HepG2 (cell line): ENCODE measurements at regions of chr16 and their contacts with region 1.

Region 1: DNA sequence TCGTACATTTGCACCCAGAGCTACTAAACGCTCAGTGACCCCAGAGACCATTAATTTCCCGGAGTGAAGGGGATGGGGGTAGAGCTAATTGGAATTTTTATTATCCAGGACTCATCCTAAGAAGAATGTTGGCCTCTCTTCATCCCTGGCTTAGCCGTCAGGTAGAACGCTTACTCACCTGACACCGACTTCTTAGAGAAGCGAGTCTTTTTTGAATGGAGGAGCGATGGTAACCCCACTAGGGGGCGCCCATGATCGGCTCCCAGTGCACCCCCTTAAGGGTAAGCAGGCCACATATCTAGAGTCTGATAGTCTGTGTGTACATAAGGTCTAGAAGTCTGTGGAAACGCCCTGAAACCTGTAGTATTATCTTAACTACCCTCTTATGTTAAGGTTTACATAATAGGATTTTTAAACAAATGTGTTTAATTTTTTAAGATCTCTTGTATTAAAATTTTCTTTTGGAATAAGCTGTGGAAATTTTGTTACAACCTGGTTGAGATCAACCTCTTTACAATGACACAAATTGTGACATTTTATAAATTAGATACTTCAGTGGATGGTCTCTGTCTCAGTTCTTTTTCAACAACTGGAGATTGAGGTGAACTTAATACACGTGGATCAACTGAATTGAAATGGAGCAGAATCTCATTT is 229.8 kb downstream of the CPPED1 start:
- DNase-seq: peak; percentile 86
- ATAC-seq: peak; percentile 84
- H3K4me3 ChIP-seq: no peak overlapping the region
- H3K27ac ChIP-seq: no peak overlapping the region
- H3K4me1 ChIP-seq: peaks cover 23% of the 10 kb centered on the region
- H3K27me3 ChIP-seq: no peaks in the 10 kb centered on the region
- CTCF ChIP-seq: peak; percentile 93
- EP300 ChIP-seq: peak in 1 of 2 experiments; percentile 62; a peak in 1 of 4 replicates
- POLR2A ChIP-seq: no peak
- RAD21 ChIP-seq: peak; percentile 99

Region 2: DNA sequence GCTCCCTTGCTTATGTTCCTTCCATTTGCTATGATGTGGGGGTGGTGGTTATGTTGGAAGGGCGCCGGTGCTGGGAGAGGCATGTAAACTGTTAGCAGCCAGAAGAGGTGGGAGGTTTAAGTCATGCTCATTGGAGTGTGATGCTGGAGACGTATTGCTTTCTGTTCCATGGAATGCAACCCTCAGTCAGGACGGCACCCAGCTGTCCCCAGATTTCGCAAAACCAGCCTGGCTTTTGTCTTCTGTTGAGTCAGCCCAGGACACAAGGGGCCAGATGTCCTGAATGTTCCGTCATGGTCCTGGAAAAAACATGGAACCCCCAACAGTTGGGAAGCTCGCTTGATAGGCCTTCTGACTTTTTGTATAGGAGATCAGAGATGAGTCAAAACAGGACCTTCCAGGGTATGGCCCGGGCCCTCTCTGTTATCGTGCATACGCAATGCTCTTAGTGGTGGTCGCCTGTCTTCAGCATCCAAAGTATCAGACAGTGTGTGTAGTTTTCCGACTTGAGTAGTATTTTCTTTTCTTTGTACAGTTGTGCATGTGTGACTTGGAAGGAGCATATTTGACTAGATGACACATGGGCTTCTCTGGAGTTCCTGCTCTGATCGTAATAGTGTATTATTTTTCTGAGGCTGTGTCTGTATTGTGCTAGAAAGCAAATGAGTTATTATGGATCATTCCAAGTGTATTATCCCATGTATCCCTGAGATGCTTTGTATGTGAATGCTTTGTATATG is 395.4 kb before region 1 on chr16:
- CTCF ChIA-PET with region 1: no interaction called
- POLR2A ChIA-PET with region 1: no interaction called
- in situ Hi-C with region 1: no loop called
- intact Hi-C with region 1: no loop called
- DNase-seq: no peak
- ATAC-seq: no peak
- H3K4me3 ChIP-seq: no peak overlapping the region
- H3K27ac ChIP-seq: no peak overlapping the region
- H3K4me1 ChIP-seq: peaks cover 12% of the 10 kb centered on the region
- H3K27me3 ChIP-seq: no peaks in the 10 kb centered on the region
- CTCF ChIP-seq: no peak
- EP300 ChIP-seq: no peak
- POLR2A ChIP-seq: no peak
- RAD21 ChIP-seq: no peak

Region 3: DNA sequence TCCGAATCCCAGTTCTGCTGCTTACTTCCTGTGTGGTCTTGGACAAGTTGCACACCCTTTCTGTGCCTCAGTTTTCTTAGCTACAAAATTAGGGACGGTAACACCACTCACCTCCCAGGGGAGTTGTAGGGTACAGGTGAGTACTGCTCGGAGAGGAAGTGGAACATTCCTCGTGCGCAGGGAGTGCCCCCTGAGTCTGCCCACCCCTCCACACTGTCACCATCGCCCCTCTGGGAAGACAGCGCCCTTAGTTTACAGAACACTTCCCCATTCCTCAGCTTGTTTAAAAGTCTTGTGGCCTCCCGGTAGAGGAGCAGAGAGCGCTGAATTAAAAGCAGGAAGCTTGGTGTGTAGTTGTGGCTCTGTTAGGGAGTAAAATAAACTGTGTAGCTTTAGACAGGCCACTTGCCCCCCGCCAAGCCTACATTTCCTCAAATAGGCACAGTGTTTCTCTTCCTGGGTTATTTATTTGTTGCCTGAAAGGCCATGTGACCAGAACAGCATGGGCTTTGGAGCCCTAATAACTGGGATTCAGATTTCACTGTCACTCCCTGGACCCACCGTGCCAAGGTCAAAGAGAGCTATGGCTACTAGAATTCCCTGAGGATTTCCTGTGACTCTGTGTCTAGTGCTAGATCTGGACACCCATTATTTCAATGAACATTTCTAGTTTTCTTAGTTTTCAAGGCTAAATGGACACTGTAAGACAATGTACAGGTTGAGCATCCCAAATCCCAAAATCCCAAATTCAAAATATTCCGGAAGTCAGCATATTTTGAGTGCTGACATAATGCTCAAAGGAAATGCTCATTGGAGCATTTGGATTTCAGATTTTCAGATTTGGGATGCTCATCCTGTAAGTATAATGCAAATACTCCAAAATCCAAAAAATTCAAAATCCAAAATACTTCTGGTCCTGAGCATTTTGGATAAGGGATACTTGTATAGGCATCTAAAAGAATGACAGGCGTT is 224.8 kb before region 1 on chr16:
- CTCF ChIA-PET with region 1: no interaction called
- POLR2A ChIA-PET with region 1: no interaction called
- in situ Hi-C with region 1: no loop called
- intact Hi-C with region 1: no loop called
- DNase-seq: peak; percentile 23
- ATAC-seq: peak; percentile 70
- H3K4me3 ChIP-seq: no peak overlapping the region
- H3K27ac ChIP-seq: no peak overlapping the region
- H3K4me1 ChIP-seq: peaks cover 12% of the 10 kb centered on the region
- H3K27me3 ChIP-seq: no peaks in the 10 kb centered on the region
- CTCF ChIP-seq: no peak
- EP300 ChIP-seq: no peak
- POLR2A ChIP-seq: no peak
- RAD21 ChIP-seq: no peak

Region 4: DNA sequence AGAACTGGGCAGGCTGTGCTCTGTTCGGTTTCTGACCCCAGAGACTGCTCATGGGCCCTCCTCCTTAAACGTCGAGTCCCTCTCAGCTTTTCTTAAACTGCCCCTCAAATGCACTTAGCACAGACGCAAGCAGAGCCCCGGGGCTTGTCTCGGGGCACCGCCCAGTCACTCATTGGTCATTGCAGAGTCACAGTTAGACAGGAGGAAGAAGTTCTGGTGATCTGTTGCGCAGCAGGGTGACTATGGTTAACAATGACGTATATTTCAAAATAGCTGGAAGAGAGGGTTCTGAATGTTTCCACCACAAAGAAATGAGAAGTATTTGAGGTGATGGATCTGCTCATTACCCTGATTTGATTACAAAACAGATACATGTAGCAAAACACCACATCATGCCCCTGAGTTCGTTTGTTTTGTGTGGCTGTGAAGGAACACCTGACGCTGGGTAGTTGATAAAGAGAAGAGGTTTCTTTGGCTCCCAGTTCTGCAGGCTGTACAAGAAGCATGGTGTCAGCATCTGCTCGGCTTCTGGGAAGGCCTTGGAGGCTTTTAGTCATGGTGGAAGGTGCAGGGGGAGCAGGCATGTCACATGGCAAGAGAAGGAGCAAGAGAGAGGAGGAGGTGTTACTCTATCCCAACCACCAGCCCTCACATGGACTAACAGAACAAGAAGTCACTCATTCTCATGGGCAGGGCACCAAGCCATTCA is 157.6 kb before region 1 on chr16:
- CTCF ChIA-PET with region 1: no interaction called
- POLR2A ChIA-PET with region 1: no interaction called
- in situ Hi-C with region 1: no loop called
- intact Hi-C with region 1: no loop called
- DNase-seq: no peak
- ATAC-seq: no peak
- H3K4me3 ChIP-seq: no peak overlapping the region
- H3K27ac ChIP-seq: no peak overlapping the region
- H3K4me1 ChIP-seq: peaks cover 17% of the 10 kb centered on the region
- H3K27me3 ChIP-seq: no peaks in the 10 kb centered on the region
- CTCF ChIP-seq: no peak
- EP300 ChIP-seq: no peak
- POLR2A ChIP-seq: no peak
- RAD21 ChIP-seq: no peak

Region 5: GRCh38 chr16:12455287-12455798 is 118.5 kb before region 1 on chr16:
- CTCF ChIA-PET with region 1: interaction called, 3 read pairs
- POLR2A ChIA-PET with region 1: no interaction called
- in situ Hi-C with region 1: no loop called
- intact Hi-C with region 1: loop called (anchors 5 kb)
- DNase-seq: peak; percentile 53
- ATAC-seq: peak; percentile 95
- H3K4me3 ChIP-seq: no peak overlapping the region
- H3K27ac ChIP-seq: no peak overlapping the region
- H3K4me1 ChIP-seq: peaks cover 20% of the 10 kb centered on the region
- H3K27me3 ChIP-seq: no peaks in the 10 kb centered on the region
- CTCF ChIP-seq: peak; percentile 99
- EP300 ChIP-seq: no peak
- POLR2A ChIP-seq: no peak
- RAD21 ChIP-seq: peak; percentile 98

Region 6: DNA sequence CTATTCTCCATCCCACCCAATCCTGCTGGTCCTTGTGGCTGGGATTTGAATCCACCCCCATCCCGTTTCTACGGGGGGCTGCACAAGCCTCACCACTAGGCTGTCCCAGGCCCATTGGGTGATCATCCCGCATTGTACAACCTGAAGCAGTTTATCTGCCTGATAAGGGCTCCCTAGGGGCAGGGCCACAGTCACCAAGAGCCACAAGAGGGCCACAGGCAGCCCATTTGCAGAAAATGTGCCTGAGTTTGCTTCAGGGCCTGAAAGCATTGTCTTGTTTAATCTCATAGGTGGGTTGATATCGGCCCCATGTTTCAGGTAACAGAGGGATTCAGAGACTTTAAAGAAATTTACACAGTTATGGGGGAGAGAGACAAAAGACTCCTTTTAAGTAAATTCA is 15.2 kb before region 1 on chr16:
- CTCF ChIA-PET with region 1: no interaction called
- POLR2A ChIA-PET with region 1: no interaction called
- in situ Hi-C with region 1: no loop called
- intact Hi-C with region 1: no loop called
- DNase-seq: peak; percentile 35
- ATAC-seq: peak; percentile 75
- H3K4me3 ChIP-seq: no peak overlapping the region
- H3K27ac ChIP-seq: no peak overlapping the region
- H3K4me1 ChIP-seq: no peaks in the 10 kb centered on the region
- H3K27me3 ChIP-seq: no peaks in the 10 kb centered on the region; a peak in 1 of 5 replicates
- CTCF ChIP-seq: peak; percentile 50
- EP300 ChIP-seq: no peak
- POLR2A ChIP-seq: no peak
- RAD21 ChIP-seq: peak; percentile 39; the same call in 1 of the 2 replicates

Region 7: DNA sequence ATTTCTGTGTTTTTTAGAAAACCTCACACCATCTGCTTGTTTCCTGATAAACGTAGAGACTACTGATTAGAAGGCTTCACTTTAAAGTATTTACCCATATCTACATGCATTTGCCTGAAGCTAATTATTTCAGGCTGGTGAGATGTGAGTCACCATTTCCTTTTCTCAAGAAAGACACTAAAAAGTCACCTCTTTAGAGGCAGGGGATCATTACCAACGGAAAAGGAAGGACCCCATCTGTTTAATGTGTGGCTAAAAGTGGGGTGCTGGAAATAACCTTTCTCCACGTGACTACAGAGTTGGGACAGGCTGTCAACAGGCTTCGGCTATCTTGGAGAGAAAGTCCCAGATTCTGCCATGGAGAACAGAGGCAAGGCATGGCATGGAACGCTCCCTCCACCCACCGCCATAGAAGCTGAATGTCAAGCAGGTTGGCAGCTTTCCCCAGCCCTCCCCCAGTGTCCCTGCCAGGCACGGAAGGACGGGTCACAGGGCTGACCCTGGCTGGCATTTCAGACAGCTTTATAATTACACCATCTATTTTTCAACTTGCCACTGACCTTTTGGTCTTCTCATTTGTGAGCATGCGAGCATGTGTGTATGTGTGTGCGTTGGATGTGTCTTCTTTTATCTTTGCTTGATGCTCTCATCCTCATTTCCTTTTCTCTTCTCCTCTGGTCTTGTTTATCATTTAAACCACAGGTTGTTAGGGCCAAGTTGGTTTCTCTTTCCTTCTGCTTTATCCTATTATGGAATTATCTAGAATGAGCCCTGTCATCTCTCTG is 72.8 kb after region 1 on chr16:
- CTCF ChIA-PET with region 1: no interaction called
- POLR2A ChIA-PET with region 1: interaction called, 6 read pairs
- in situ Hi-C with region 1: no loop called
- intact Hi-C with region 1: loop called (anchors 5 kb)
- DNase-seq: peak; percentile 47
- ATAC-seq: no peak
- H3K4me3 ChIP-seq: no peak overlapping the region
- H3K27ac ChIP-seq: no peak overlapping the region
- H3K4me1 ChIP-seq: peaks cover 48% of the 10 kb centered on the region
- H3K27me3 ChIP-seq: no peaks in the 10 kb centered on the region
- CTCF ChIP-seq: no peak
- EP300 ChIP-seq: no peak
- POLR2A ChIP-seq: no peak
- RAD21 ChIP-seq: no peak

Region 8: GRCh38 chr16:12758031-12758701 is 184.3 kb after region 1 on chr16:
- CTCF ChIA-PET with region 1: no interaction called
- POLR2A ChIA-PET with region 1: interaction called, 6 read pairs
- in situ Hi-C with region 1: no loop called
- intact Hi-C with region 1: loop called (anchors 5 kb)
- DNase-seq: no peak
- ATAC-seq: no peak
- H3K4me3 ChIP-seq: no peak overlapping the region
- H3K27ac ChIP-seq: no peak overlapping the region
- H3K4me1 ChIP-seq: peaks cover 58% of the 10 kb centered on the region
- H3K27me3 ChIP-seq: no peaks in the 10 kb centered on the region
- CTCF ChIP-seq: no peak
- EP300 ChIP-seq: no peak
- POLR2A ChIP-seq: no peak
- RAD21 ChIP-seq: no peak

Region 9: DNA sequence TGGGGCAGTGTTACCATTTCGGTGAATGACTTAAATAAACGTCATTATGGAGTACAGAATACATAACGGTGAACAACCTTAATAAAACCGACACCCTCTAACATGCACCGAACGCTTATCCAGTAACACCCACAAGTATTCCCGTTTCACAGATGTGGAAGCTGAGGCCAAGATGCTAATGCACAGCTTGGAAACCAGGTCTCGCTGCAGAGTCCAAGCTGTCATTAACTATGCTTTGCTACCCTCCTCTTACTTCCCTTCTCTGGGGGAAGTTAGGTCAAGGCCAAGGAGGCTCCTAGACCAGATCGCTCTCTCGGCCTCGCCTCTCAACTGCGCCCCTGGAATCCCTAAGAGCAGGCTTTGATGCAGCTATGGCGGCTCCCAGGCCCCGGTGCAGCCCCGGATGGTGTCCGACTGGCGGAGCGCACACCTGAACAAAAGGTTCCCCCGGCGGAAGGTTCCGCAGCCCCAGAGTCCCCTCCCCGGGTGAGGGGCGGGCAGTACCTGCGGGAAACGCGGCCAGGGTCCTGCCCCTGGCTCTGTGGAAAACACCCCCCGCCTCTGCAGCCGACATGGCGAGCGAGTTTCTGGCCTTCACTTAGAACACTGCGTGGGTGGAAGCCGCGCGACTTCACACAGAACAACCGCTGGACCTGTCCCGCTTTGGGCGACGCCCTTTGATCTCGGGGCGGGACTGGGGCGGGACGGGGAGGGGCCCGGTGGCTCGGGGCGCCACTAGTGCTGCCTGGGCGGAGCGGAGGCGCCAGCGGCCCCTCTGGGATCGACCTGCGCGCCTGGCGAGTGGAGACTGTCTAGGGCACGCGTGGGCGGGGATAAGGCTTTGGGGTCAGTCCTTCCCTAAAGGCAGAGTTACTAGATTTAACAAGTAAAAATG is 229.6 kb after region 1 on chr16 and contains the start of gene CPPED1:
- CTCF ChIA-PET with region 1: no interaction called
- POLR2A ChIA-PET with region 1: interaction called, 7 read pairs
- in situ Hi-C with region 1: no loop called
- intact Hi-C with region 1: loop called (anchors 5 kb)
- DNase-seq: peak; percentile 93
- ATAC-seq: peak; percentile 92
- H3K4me3 ChIP-seq: peak within 1 kb of the TSS; percentile 86 to 97 (median 87)
- H3K27ac ChIP-seq: peak within 1 kb of the TSS; percentile 97
- H3K4me1 ChIP-seq: peaks cover 58% of the 10 kb centered on the region
- H3K27me3 ChIP-seq: peaks cover 0 to 7% of the 10 kb centered on the region in 2 experiments; a peak in 1 of 5 replicates
- CTCF ChIP-seq: peak; percentile 45
- EP300 ChIP-seq: peak in 1 of 2 experiments; percentile 89
- POLR2A ChIP-seq: peak; percentile 94 to 97
- RAD21 ChIP-seq: peak; percentile 78
- total RNA-seq, gene CPPED1: 66.6 and 118 TPM in 2 replicates

Region 10: GRCh38 chr16:12819126-12820117 is 245.6 kb after region 1 on chr16:
- CTCF ChIA-PET with region 1: interaction called, 36 read pairs
- POLR2A ChIA-PET with region 1: no interaction called
- in situ Hi-C with region 1: loop called (anchors 5 kb)
- intact Hi-C with region 1: loop called (anchors 1 kb)
- DNase-seq: peak; percentile 79
- ATAC-seq: peak; percentile 77
- H3K4me3 ChIP-seq: no peak overlapping the region
- H3K27ac ChIP-seq: no peak overlapping the region
- H3K4me1 ChIP-seq: peaks cover 34% of the 10 kb centered on the region
- H3K27me3 ChIP-seq: 0 out of 5 replicates have a peak, but pooled peaks cover 0 to 13% of the 10 kb centered on the region in 2 experiments
- CTCF ChIP-seq: peak; percentile 97
- EP300 ChIP-seq: no peak
- POLR2A ChIP-seq: no peak
- RAD21 ChIP-seq: peak; percentile 90